AG04449 (cell line): ENCODE measurements at regions of chr12 and their contacts with region 1.

Region 1: DNA sequence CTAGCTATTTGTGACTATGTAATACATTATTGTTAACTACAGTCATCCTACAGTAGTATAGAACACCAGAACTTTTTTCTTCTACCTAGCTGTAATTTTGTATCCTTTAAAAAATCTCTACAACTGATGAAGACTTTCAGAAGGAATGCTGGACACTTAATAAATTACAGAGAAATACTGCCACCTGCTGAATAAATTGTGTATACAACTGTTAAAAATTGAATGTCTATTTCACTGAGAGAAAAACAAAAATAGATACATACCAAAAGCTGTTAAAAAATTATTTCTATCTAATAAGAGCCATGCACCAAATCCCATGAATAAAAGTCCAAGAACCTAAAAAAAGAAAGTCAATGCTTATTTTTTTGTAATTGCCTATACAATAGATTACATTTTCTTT is 6.6 kb downstream of the TSPAN19 start:
- DNase-seq: no peak
- H3K4me3 ChIP-seq: no peak overlapping the region
- CTCF ChIP-seq: no peak

Region 2: GRCh38 chr12:84924981-84925380 is 104.5 kb before region 1 on chr12:
- CTCF ChIA-PET with region 1: no interaction called
- POLR2A ChIA-PET with region 1: no interaction called
- DNase-seq: no peak
- H3K4me3 ChIP-seq: no peak overlapping the region
- CTCF ChIP-seq: no peak

Region 3: DNA sequence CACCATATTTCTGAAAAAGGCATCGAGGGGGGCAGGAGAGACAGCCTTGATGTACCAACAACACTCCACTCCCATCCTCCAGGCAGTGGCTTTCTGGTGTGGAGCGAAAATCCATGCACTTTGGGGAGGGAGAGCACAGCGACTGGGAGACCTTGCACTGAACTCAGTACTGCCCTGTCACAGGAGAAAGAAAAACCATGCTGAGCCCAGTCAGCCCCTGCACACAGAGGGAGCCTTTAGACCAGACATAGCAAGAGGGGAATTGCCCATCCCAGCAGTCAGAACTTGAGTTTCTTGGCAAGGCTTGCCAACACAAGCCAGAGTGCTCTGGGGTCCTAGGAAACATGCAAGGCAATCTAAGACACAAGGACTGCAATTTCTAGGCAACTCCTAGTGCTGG is 92.0 kb before region 1 on chr12:
- CTCF ChIA-PET with region 1: no interaction called
- POLR2A ChIA-PET with region 1: no interaction called
- DNase-seq: no peak
- H3K4me3 ChIP-seq: no peak overlapping the region
- CTCF ChIP-seq: no peak

Region 4: GRCh38 chr12:85043821-85044220 is 14.4 kb after region 1 on chr12:
- CTCF ChIA-PET with region 1: interaction called, 11 read pairs
- POLR2A ChIA-PET with region 1: no interaction called
- DNase-seq: no peak
- H3K4me3 ChIP-seq: no peak overlapping the region
- CTCF ChIP-seq: no peak